SK-N-SH (cell line): ENCODE measurements at regions of chr20 and their contacts with region 1.

Region 1: DNA sequence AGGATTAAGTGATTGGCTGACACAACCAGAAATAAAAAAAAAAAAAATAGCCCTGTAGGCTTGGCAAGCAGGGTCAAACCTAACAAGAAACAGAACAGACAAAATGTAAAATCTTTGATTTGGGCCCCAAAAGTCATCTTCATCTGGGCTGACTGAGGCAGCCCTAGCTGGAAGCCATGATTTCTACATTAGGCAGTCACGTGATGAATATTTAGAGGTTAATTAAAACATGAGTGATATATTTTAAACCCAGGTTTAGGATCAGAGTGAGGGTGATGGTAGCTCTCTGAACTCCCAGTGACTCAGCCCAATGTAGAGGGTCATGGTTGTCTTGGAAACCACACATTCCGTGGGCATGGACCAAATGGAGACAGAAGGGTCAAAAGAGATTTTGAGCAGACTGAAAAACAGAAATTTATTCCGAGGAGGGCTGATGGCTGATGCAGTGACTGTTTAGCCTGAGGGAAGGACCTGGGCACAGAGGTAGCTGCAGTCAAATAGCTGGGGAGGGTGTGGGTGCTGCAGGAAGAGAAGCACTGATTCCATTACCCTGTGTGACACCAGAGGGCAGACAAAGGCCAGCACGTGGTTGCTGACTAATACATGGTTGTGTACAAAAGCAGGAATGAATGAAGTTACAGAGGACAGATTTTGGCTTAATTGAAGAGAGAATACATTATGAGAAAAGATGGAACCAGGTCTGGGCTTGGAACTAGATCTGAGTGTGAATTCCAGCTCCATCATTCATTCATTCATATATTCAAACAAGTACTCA is 573.2 kb upstream of the CHD6 start:
- DNase-seq: no peak
- H3K4me3 ChIP-seq: no peak overlapping the region
- H3K27ac ChIP-seq: no peak overlapping the region
- H3K4me1 ChIP-seq: peaks cover 0 to 8% of the 10 kb centered on the region in 2 experiments; a peak in 1 of 4 replicates
- H3K27me3 ChIP-seq: no peaks in the 10 kb centered on the region
- CTCF ChIP-seq: no peak
- EP300 ChIP-seq: no peak
- RAD21 ChIP-seq: peak; percentile 41

Region 2: GRCh38 chr20:42179771-42180170 is 11.6 kb before region 1 on chr20:
- CTCF ChIA-PET with region 1: interaction called, 10 read pairs
- POLR2A ChIA-PET with region 1: no interaction called
- DNase-seq: no peak
- H3K4me3 ChIP-seq: no peak overlapping the region
- H3K27ac ChIP-seq: no peak overlapping the region
- H3K4me1 ChIP-seq: no peaks in the 10 kb centered on the region
- H3K27me3 ChIP-seq: no peaks in the 10 kb centered on the region
- CTCF ChIP-seq: no peak
- EP300 ChIP-seq: no peak
- RAD21 ChIP-seq: no peak